ENCODE measurements at regions of chr17 and their contacts with region 1.

Region 1: GRCh38 chr17:48791128-48792032 is 25.6 kb downstream of the TTLL6 start:
- DNase-seq: peak; percentile 86
- H3K4me3 Mint-ChIP-seq: no peak overlapping the region
- H3K27ac Mint-ChIP-seq: no peak overlapping the region
- H3K4me1 Mint-ChIP-seq: peaks cover 9% of the 10 kb centered on the region
- H3K27me3 Mint-ChIP-seq: peaks cover 44% of the 10 kb centered on the region
- CTCF ChIP-seq: peak; percentile 68

Region 2: DNA sequence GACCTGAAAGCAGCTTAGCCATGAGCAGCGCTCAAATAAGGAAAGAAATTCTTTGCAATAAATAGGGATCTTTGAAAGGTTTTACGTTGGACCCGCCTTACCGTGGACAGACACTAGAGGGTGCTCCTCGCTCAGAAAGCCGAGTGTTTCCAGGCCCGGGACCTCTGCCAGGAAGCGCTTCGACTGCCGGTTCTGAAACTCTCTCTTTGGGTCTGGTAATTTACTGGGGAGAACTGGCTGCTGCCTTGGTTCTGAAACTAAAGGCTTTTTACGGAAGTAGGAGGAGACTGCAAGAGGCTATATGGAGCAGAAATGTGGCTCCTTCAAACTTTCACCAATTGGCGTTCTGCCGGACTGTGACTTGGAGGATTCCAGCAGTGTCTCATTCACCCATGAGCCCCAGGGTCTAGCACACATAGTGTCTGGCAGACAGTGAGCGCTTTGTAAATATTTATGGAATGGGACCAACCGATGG is 119.6 kb before region 1 on chr17:
- CTCF ChIA-PET with region 1: interaction called, 75 read pairs
- POLR2A ChIA-PET with region 1: interaction called, 3 read pairs
- intact Hi-C with region 1: loop called (anchors 1 kb)
- DNase-seq: peak; percentile 75
- H3K4me3 Mint-ChIP-seq: peak overlapping the region; percentile 75
- H3K27ac Mint-ChIP-seq: no peak overlapping the region
- H3K4me1 Mint-ChIP-seq: no peaks in the 10 kb centered on the region
- H3K27me3 Mint-ChIP-seq: peaks cover 22% of the 10 kb centered on the region
- CTCF ChIP-seq: peak; percentile 87

Region 3: DNA sequence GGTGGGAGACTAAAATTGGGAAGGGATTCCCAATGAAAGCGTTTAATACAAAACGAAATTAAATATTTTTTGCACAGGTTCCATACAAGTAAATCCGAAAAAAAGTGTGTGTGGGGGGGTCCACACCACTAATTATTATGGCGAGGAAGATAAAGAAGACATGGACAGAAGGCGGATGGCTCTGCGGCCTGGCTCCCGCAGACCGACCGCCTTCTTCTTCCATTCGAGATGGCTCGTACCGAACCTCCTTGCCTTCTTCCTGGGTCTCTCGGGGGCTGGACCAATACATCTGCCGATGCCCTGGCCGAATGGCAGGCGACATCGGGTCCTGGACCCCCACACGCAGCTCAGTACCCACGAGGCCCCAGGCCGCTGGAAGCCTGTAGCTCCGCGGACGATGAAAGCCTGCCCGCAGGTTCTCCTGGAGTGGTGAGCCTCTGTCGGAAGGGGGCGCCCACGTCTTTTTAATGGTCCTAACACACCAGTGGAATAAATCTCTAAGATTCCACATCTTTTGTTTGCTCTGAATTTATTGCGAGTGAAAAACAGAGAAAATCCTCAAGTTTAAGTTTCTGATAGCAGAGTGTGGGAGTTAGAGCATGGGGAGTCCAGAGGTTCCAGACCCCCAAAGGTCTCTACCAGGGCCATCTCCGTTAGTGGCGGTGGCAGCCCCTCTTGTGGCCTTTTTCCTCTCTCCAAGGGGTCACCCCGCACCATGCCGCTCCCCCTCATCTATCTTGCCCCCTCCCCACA is 67.0 kb before region 1 on chr17:
- CTCF ChIA-PET with region 1: interaction called, 81 read pairs
- POLR2A ChIA-PET with region 1: interaction called, 17 read pairs
- intact Hi-C with region 1: loop called (anchors 1 kb)
- DNase-seq: peak; percentile 78
- H3K4me3 Mint-ChIP-seq: peak overlapping the region; percentile 17
- H3K27ac Mint-ChIP-seq: no peak overlapping the region
- H3K4me1 Mint-ChIP-seq: peaks cover 11% of the 10 kb centered on the region
- H3K27me3 Mint-ChIP-seq: peaks cover 56% of the 10 kb centered on the region
- CTCF ChIP-seq: peak; percentile 74

Region 4: GRCh38 chr17:48767263-48767774 is 24.1 kb before region 1 on chr17:
- CTCF ChIA-PET with region 1: interaction called, 11 read pairs
- POLR2A ChIA-PET with region 1: no interaction called
- intact Hi-C with region 1: no loop called
- DNase-seq: no peak
- H3K4me3 Mint-ChIP-seq: no peak overlapping the region
- H3K27ac Mint-ChIP-seq: no peak overlapping the region
- H3K4me1 Mint-ChIP-seq: no peaks in the 10 kb centered on the region
- H3K27me3 Mint-ChIP-seq: peaks cover 71% of the 10 kb centered on the region
- CTCF ChIP-seq: no peak

Region 5: DNA sequence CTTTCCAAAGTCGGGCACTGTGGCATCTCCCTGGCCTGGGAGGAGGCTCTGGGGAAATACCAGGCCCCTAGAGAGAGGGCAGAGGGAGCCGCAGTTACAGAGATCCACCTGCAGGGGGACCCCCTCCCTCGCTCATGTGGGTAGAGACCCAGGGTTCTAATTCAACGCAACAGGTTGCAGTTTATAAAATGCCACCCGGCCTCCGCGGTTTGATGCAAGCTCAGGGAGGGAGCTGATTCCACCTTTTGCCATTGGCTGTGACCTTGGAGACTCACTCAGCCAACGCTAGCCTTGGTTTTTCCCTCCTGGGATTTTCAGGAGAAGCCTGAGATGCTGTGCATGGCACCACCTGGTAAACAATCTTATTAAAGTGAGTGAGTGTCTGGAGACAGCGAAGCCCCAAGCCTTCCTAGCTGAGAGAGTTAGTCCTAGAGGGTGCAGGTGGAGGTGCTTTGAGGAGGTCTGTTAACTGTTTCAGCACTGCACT is 13.6 kb after region 1 on chr17:
- CTCF ChIA-PET with region 1: interaction called, 18 read pairs
- POLR2A ChIA-PET with region 1: no interaction called
- intact Hi-C with region 1: no loop called
- DNase-seq: peak; percentile 67
- H3K4me3 Mint-ChIP-seq: no peak overlapping the region
- H3K27ac Mint-ChIP-seq: no peak overlapping the region
- H3K4me1 Mint-ChIP-seq: peaks cover 4% of the 10 kb centered on the region
- H3K27me3 Mint-ChIP-seq: peaks cover 11% of the 10 kb centered on the region
- CTCF ChIP-seq: peak; percentile 89

Measured in MCF 10A (cell line).